ENCODE measurements at regions of chr19 and their contacts with region 1.

Region 1: DNA sequence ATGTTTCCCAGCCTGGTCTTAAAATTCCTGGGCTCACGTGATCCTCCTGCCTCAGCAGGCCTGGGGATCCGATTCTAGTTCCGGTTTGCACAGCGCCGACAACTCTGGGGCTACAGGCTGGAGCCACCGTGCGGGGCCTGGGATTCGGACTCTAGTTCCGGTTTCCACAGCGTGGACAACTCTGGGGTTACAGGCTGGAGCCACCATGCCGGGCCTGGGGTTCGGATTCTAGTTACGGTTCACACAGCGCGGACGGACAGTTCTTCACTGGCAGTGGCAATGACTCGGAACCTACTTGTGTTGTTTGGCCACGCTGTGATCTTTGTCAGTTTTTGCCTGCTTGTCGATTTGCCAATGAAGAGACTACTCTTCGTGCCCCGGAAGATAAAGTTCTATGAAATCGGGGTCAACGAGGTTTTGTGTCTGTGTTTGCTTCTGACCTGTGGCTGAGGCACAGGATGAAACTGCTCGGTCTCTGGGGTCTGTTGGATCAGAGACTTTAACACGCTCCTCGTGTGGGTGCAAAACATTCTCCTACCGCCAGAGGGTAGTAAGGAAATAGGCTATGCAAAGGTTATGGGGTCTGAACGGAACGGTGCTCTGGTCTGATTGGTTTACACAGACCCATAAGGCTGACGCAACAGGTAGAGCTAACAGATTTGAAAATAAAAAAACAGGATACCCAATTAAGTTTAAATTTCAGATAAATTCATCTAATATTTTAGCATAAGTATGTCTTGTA is 12.1 kb upstream of the ZSCAN1 start:
- DNase-seq: no peak
- ATAC-seq: no peak
- H3K4me3 ChIP-seq: no peak overlapping the region
- H3K27ac ChIP-seq: no peak overlapping the region
- H3K4me1 ChIP-seq: no peaks in the 10 kb centered on the region
- H3K27me3 ChIP-seq: no peaks in the 10 kb centered on the region
- CTCF ChIP-seq: peak in 4 of 5 experiments; percentile 34 to 56 (median 46)
- POLR2A ChIP-seq: no peak

Region 2: GRCh38 chr19:58033741-58034471 is 12.2 kb after region 1 on chr19 and contains the start of gene ZSCAN1:
- in situ Hi-C with region 1: no loop called
- intact Hi-C with region 1: no loop called
- DNase-seq: peak; percentile 8 to 14
- ATAC-seq: peak in 1 of 2 donors; percentile 47
- H3K4me3 ChIP-seq: peak within 1 kb of the TSS in 2 of 4 donors; percentile 18 to 27
- H3K27ac ChIP-seq: no peak within 1 kb of the TSS
- H3K4me1 ChIP-seq: no peaks in the 10 kb centered on the region
- H3K27me3 ChIP-seq: peaks cover 8 to 34% (median 32%) of the 10 kb centered on the region in 3 donors
- CTCF ChIP-seq: no peak
- POLR2A ChIP-seq: no peak
- total RNA-seq, gene ZSCAN1: not detected

Region 3: GRCh38 chr19:58154679-58155648 is 133.3 kb after region 1 on chr19:
- in situ Hi-C with region 1: no loop called
- intact Hi-C with region 1: loop called (anchors 1 kb)
- DNase-seq: peak; percentile 65 to 80
- ATAC-seq: peak; percentile 90 to 91
- H3K4me3 ChIP-seq: peak overlapping the region; percentile 78 to 99 (median 86)
- H3K27ac ChIP-seq: peak overlapping the region; percentile 74 to 86 (median 81)
- H3K4me1 ChIP-seq: peaks cover 0 to 9% of the 10 kb centered on the region in 2 donors
- H3K27me3 ChIP-seq: peaks cover 0 to 9% (median 0%) of the 10 kb centered on the region in 3 donors
- CTCF ChIP-seq: peak; percentile 79 to 95 (median 89)
- POLR2A ChIP-seq: peak; percentile 20 to 30

Measured in gastrocnemius medialis (tissue), 4 donors.